Left ventricle myocardium superior (tissue), 1 donor: ENCODE measurements at regions of chr17 and their contacts with region 1.

Region 1: GRCh38 chr17:65389953-65390352 is 171.5 kb downstream of the AXIN2 start:
- DNase-seq: no peak
- ATAC-seq: no peak

Region 2: DNA sequence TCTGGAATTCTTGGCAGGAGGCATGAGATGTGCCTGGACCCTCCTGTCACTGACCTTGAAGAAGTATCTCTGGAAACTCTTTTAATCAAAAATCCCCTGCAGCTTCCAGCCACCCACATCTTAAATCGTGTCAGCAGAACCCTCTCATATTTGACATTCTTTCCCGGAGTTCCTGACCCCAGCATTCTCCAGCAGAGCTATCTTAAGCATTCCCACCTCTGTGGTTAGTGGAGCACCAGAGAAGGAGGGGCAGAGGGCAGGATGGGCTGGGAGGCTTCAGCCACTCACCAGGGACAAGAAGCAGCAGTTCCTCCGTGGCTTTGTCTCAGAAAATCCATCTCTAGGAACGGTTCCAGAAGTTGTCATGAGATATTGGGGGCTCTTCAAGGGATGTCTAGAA is 102.9 kb before region 1 on chr17:
- intact Hi-C with region 1: no loop called
- DNase-seq: no peak
- ATAC-seq: no peak

Region 3: GRCh38 chr17:65345261-65346005 is 44.5 kb before region 1 on chr17:
- intact Hi-C with region 1: loop called (anchors 10 kb)
- DNase-seq: no peak
- ATAC-seq: no peak

Region 4: GRCh38 chr17:65472415-65473309 is 82.7 kb after region 1 on chr17:
- intact Hi-C with region 1: no loop called
- DNase-seq: no peak
- ATAC-seq: peak; percentile 63

Region 5: GRCh38 chr17:65515959-65516948 is 126.3 kb after region 1 on chr17:
- intact Hi-C with region 1: no loop called
- DNase-seq: no peak
- ATAC-seq: no peak

Region 6: DNA sequence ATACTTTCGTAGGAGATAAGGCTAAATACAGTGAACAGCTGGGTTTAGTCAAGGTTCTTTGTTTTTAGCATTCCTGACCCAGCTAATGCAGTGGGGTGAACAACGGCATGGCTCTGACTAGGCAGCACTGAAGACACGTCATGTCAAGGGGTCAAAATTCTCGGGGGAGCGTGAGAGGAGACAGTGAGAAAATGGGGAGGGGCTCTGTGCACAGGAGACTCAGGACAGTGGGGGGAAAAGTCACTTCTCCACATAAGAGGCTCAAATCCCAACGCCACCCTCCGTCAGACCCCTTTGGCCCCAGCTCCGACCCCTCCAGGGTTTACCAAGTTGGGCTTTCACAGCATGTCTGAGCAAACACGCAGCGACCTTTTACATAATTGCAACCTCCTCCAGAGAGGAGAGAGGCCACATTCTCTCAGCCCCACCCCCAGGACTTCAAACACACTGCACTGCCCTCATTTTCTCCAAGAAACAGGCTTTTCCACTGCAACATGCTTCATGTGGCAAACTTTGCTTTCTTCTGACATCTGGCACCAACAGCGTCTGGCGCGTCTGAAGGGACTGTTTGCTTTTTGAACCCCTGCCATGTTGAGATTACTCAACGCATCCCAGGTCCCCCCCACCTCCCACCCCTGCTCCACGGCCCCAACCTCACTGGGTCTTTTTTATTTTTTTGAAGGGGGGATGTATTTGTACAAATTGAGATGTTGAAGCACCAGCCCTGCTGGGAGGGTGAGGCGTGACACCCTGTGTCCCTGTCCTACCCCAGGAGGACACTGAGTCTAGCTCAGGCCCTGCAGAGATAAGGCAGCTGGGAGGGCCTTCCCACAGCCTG is 141.5 kb after region 1 on chr17:
- intact Hi-C with region 1: no loop called
- DNase-seq: peak; percentile 68
- ATAC-seq: peak; percentile 83